Heart left ventricle (tissue), 16 donors: ENCODE measurements at regions of chr1 and their contacts with region 1.

Region 1: GRCh38 chr1:20029178-20029912 is 40.6 kb upstream of the PLA2G5 start:
- DNase-seq: peak; percentile 36 to 60 (median 46)
- ATAC-seq: peak; percentile 29 to 71 (median 58)
- H3K4me3 ChIP-seq: peak overlapping the region; percentile 25 to 65 (median 52)
- H3K27ac ChIP-seq: peak overlapping the region; percentile 55 to 96 (median 86)
- H3K4me1 ChIP-seq: peaks cover 0 to 26% (median 0%) of the 10 kb centered on the region in 12 donors
- H3K27me3 ChIP-seq: peaks cover 0 to 3% (median 0%) of the 10 kb centered on the region in 9 donors
- CTCF ChIP-seq: no peak
- POLR2A ChIP-seq: peak in 1 of 2 donors; percentile 44

Region 2: GRCh38 chr1:20069874-20070273 is 40.5 kb after region 1 on chr1 and contains the start of gene PLA2G5:
- intact Hi-C with region 1: loop called in 1 of 10 experiments (anchors 5 kb)
- DNase-seq: peak; percentile 82 to 91 (median 89)
- ATAC-seq: peak; percentile 91 to 97 (median 94)
- H3K4me3 ChIP-seq: peak within 1 kb of the TSS; percentile 31 to 70 (median 52)
- H3K27ac ChIP-seq: peak within 1 kb of the TSS; percentile 41 to 96 (median 84)
- H3K4me1 ChIP-seq: peaks cover 2 to 56% (median 23%) of the 10 kb centered on the region in 12 donors
- H3K27me3 ChIP-seq: no peaks in the 10 kb centered on the region
- CTCF ChIP-seq: no peak
- POLR2A ChIP-seq: peak in 1 of 2 donors; percentile 23
- total RNA-seq, gene PLA2G5: 31.9 to 80.3 (median 43.9) TPM

Region 3: DNA sequence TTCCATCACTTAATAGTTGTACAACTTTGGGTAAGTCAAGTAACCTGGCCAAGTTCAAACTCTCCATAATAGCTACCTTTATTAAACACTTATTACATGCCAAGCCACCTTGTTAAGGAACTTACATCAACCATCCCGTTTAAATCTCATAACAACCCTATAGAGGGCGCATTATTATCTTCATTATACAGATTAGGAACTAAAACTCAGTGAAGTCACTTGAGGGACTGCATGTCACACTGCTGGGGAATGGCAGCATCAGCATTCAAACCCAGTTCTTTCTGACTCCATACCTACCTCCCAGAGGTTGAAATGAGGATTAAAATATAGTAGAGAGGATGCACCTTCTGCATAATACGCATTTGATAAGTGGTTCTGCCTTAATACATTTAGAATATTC is 204.0 kb after region 1 on chr1:
- intact Hi-C with region 1: no loop called
- DNase-seq: no peak
- ATAC-seq: peak in 1 of 4 donors; percentile 62
- H3K4me3 ChIP-seq: no peak overlapping the region
- H3K27ac ChIP-seq: no peak overlapping the region
- H3K4me1 ChIP-seq: peaks cover 0 to 6% (median 0%) of the 10 kb centered on the region in 12 donors
- H3K27me3 ChIP-seq: peaks cover 0 to 43% (median 12%) of the 10 kb centered on the region in 9 donors
- CTCF ChIP-seq: peak in 9 of 12 donors; percentile 14 to 42 (median 32)
- POLR2A ChIP-seq: no peak